ENCODE measurements at regions of chr5 and their contacts with region 1.

Region 1: DNA sequence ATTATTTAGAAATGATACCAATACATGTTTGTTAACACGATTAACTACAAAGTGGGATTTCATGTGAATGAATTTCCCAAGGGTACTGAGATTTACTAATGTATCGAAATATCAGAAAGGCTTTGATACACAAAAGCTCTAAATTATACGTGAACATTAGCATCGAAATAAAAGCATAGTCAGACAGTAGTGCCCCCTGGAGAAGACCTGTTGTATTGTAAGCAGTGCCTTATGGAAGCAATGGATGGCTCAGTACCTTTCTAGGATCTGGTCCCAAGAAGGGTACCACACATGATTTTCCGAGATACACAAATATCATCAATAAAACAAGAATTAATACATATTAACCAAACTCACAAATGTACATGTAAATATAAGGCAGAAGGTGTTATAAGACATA is 153.8 kb downstream of the CDH12 start:
- DNase-seq: peak; percentile 4
- ATAC-seq: no peak
- H3K4me3 ChIP-seq: no peak overlapping the region
- H3K27ac ChIP-seq: no peak overlapping the region
- H3K4me1 ChIP-seq: no peaks in the 10 kb centered on the region
- H3K27me3 ChIP-seq: no peaks in the 10 kb centered on the region
- CTCF ChIP-seq: peak; percentile 40
- POLR2A ChIP-seq: no peak
- RAD21 ChIP-seq: peak; percentile 52

Region 2: GRCh38 chr5:21919410-21920022 is 779.8 kb before region 1 on chr5:
- CTCF ChIA-PET with region 1: no interaction called
- POLR2A ChIA-PET with region 1: no interaction called
- dilution Hi-C with region 1: no loop called
- in situ Hi-C with region 1: no loop called
- intact Hi-C with region 1: loop called (anchors 2 kb)
- DNase-seq: peak; percentile 45
- ATAC-seq: peak; percentile 72
- H3K4me3 ChIP-seq: no peak overlapping the region
- H3K27ac ChIP-seq: no peak overlapping the region
- H3K4me1 ChIP-seq: no peaks in the 10 kb centered on the region
- H3K27me3 ChIP-seq: no peaks in the 10 kb centered on the region
- CTCF ChIP-seq: peak; percentile 67
- POLR2A ChIP-seq: no peak
- RAD21 ChIP-seq: peak; percentile 60

Region 3: DNA sequence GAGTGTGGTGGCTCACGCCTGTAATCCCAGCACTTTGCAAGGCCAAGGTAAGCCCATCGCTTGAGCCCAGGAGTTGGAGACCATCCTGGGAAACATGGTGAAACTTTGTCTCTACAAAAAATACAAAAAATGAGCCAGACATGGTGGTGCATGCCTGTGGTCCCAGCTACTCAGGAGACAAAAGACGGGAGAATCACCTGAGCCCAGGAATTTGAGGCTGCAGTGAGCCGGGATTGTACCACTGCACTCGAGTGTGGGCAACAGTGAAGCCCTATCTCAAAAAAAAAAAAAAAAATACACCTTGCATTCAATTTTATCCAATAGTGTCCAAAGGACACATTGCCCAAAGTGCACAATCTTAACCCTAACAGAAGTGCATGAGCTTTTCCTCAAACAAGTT is 219.0 kb before region 1 on chr5:
- CTCF ChIA-PET with region 1: no interaction called
- POLR2A ChIA-PET with region 1: no interaction called
- dilution Hi-C with region 1: no loop called
- in situ Hi-C with region 1: no loop called
- intact Hi-C with region 1: no loop called
- DNase-seq: no peak
- ATAC-seq: no peak
- H3K4me3 ChIP-seq: no peak overlapping the region
- H3K27ac ChIP-seq: no peak overlapping the region
- H3K4me1 ChIP-seq: no peaks in the 10 kb centered on the region
- H3K27me3 ChIP-seq: no peaks in the 10 kb centered on the region
- CTCF ChIP-seq: no peak
- POLR2A ChIP-seq: no peak
- RAD21 ChIP-seq: no peak

Measured in IMR-90 (cell line).